ENCODE measurements at regions of chr12 and their contacts with region 1.

Region 1: DNA sequence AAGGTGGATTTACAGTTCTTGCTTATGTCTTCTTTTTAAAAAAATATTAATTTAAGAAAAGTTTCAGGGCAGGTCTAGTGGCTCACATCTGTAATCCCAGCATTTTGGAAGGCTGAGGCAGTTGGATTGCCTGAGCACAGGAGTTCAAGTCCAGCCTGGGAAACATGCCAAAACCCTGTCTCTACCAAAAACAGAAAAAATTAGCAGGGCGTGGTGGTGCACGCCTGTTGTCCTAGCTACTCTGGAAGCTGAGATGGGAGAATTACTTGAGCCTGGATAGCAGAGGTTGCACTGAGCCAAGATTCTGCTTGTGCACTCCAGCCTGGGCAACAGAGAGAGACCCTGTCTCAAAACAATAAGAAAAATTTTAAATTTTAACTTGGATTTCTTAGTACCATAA is 5.4 kb upstream of the TAS2R46 start:
- DNase-seq: no peak

Region 2: DNA sequence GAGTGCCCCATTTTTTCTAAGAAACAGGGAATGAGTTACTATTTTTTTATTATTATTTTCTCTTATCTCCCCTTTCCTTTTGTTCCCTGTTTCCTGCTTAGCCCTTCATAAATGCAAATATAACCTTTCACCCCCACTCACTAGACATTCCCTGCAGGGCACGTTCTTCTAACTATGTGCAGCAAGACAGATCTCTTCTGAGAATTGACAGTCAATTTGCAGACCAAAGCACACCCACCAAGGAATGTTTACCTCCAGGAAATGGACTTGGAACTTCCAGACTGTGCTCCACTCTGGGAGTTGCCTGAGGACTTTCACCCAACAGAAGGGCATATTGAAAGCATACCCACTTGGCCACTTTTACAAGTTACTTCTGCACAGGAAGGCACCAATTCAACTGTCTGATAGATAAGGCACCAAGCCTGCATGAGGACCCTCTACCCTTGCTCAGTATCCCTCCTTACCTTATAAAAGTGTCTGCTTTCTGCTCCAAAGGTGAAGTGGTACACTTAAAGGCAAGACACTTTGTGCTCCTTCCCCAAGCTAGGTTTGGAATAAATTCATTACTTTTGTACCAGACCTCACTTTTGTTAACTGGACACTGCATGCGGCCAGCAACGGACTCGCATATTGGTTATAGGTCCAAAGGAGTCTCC is 51.6 kb before region 1 on chr12:
- intact Hi-C with region 1: loop called (anchors 2 kb)
- DNase-seq: no peak

Region 3: GRCh38 chr12:11162502-11162901 is 95.0 kb after region 1 on chr12:
- intact Hi-C with region 1: loop called (anchors 10 kb)
- DNase-seq: no peak

Region 4: DNA sequence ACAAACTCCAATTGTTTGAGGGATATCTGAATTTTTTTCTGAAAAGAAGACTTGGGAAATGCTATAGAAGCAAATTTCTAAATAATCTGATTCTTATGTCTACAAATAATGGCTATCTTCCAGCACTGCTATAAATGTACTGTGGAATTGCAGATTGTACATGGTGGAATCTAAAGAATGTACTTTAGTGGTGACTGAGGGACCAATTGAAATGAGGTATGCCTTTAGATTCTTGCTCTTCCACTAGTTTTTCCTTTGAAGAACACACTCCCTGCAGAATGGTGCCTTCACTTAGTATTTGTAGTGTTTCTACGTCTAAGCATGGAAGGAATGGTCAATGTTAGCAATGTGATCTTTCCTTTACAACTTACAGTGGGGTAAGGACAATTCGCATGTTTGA is 254.5 kb after region 1 on chr12:
- intact Hi-C with region 1: no loop called
- DNase-seq: no peak

Region 5: GRCh38 chr12:11607313-11608081 is 540.0 kb after region 1 on chr12:
- intact Hi-C with region 1: no loop called
- DNase-seq: no peak

Measured in cardiac septum (tissue), 1 donor.